Aorta (tissue), 5 donors: ENCODE measurements at regions of chr16 and their contacts with region 1.

Region 1: GRCh38 chr16:15880434-15881308 is 7.7 kb downstream of the CEP20 start:
- DNase-seq: peak in 1 of 2 donors; percentile 39
- ATAC-seq: no peak
- H3K4me3 ChIP-seq: no peak overlapping the region
- H3K27ac ChIP-seq: no peak overlapping the region
- H3K4me1 ChIP-seq: no peaks in the 10 kb centered on the region
- H3K27me3 ChIP-seq: no peaks in the 10 kb centered on the region

Region 2: DNA sequence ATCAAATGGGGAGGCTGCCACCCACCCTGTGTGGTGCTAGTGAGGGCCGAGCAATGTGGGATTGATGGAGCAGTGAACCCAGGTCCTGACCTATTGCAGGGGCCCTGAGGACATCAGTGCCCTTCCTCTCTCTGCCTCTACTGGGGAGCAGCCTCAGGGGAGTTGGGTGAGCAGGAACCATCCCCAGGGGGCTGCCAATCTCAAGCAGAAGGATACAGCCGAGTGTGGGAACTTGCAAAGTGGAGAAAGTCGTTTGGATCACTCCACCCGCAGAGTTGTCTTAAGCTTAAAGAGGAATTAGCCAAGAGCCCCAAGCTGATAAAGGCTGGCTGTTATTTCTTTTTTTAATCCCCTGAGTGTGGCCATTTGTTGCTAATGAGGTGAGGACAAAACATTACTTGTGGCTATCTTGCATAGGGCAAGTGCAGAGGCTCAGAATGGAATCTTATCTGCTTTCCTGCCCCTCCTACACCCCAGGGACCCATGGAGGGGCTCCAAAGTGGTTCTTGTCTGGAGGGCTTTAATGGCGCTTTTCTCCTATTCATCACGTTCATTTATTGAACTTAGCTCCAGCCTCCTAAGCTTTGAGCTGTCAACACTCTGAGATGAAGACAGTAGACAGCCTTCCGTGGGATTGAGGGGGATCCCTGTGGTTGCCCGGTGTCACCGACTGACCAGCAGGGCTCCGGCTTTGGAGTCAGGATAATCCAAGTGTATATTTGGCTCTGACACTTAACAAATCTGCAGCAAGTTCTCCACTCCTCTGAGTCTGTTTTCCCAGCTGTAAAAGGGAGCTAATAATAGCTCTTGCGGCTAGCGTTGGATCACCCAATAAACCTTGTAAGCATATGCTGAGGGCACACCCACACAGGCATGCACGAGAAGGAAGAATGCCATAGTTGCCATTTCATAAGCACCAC is 68.9 kb before region 1 on chr16:
- intact Hi-C with region 1: no loop called
- DNase-seq: peak; percentile 71 to 76
- ATAC-seq: peak; percentile 77
- H3K4me3 ChIP-seq: no peak overlapping the region
- H3K27ac ChIP-seq: peak overlapping the region; percentile 33 to 91
- H3K4me1 ChIP-seq: peaks cover 1 to 8% of the 10 kb centered on the region in 2 donors
- H3K27me3 ChIP-seq: no peaks in the 10 kb centered on the region

Region 3: DNA sequence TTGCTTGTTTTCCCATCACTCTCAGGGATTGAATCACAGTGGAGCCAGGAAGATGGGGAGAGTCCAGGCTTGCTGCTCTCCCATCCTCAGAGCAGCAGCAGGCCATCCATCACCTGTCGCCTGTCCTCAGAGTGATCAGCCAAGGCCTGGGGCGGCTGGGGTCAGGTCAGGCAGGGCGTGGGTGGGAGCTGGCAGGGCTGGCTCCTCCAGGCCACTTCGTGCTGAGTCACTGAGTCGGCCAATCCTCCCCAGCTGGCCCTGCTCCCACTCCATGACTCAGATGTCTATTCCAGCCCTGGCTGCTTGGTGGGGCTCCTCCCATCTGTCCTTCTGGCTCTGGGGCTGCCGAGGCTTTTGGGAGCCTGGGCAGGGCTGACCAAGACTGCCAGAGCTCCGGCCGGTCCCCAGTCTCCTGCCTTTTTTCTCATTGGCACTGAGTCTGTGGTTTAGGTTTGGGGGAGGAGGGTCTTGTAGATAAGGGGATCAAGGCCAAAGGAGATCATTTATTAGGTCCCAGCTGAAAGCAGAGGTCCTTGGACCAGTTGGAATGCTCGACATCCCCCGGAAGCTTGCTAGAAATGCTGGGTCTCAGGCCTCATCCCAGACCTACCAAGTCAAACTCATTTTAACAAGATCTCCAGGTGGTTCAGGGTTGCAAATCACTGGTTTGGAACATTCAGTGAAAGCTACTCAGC is 141.5 kb after region 1 on chr16:
- intact Hi-C with region 1: loop called in 1 of 2 experiments (anchors 5 kb)
- DNase-seq: peak; percentile 97 to 99
- ATAC-seq: peak; percentile 94
- H3K4me3 ChIP-seq: no peak overlapping the region
- H3K27ac ChIP-seq: peak overlapping the region; percentile 2 to 69
- H3K4me1 ChIP-seq: peaks cover 3 to 4% of the 10 kb centered on the region in 2 donors
- H3K27me3 ChIP-seq: no peaks in the 10 kb centered on the region